B cell (primary cell): ENCODE measurements at regions of chr22 and their contacts with region 1.

Region 1: GRCh38 chr22:30634471-30635233 is 929 bp upstream of the SLC35E4 start:
- DNase-seq: peak; percentile 92
- ATAC-seq: peak; percentile 52
- H3K4me3 ChIP-seq: peak overlapping the region in 4 of 5 experiments; percentile 52 to 79 (median 65)
- H3K4me3 Mint-ChIP-seq: peak overlapping the region; percentile 88
- H3K27ac ChIP-seq: peak overlapping the region; percentile 82 to 88
- H3K27ac Mint-ChIP-seq: peak overlapping the region; percentile 94
- H3K4me1 ChIP-seq: peaks cover 18 to 28% of the 10 kb centered on the region in 2 donors
- H3K4me1 Mint-ChIP-seq: peaks cover 19% of the 10 kb centered on the region
- H3K27me3 ChIP-seq: no peaks in the 10 kb centered on the region
- H3K27me3 Mint-ChIP-seq: no peaks in the 10 kb centered on the region
- CTCF ChIP-seq: peak; percentile 91

Region 2: DNA sequence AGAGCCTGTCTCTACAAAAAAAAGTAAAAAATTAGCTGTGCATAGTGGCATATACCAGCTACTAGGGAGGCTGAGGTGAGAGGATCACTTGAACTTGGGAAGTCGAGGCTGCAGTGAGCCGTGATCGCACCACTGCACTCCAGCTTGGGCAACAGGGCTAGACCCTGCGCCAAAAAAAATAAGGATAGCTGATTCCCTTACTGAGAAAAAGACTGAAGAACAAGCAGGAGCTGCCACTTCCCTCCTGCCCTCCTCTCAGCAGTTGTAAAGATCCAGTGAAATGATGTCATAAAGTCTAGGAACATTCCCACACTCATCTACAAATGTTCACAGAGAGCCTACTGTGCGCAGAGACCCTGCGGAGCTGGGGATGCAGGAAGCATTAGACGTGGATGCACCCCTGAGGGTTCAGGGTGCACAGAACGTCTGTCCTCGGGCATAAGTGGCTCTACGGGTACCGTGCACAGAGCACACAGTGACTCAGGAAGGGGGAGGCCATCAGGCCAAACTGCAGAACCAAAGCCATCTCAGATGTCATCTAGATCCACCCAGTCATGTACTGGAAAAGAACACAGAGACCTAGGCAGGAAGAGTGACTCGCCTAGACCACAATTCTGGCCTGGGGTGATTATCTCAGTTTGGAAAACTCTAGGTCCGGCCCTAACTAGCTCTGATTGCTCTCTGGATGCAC is 226.1 kb before region 1 on chr22:
- CTCF ChIA-PET with region 1: no interaction called
- POLR2A ChIA-PET with region 1: no interaction called
- intact Hi-C with region 1: no loop called
- DNase-seq: no peak
- ATAC-seq: no peak
- H3K4me3 ChIP-seq: no peak overlapping the region
- H3K4me3 Mint-ChIP-seq: no peak overlapping the region
- H3K27ac ChIP-seq: no peak overlapping the region
- H3K27ac Mint-ChIP-seq: no peak overlapping the region
- H3K4me1 ChIP-seq: no peaks in the 10 kb centered on the region
- H3K4me1 Mint-ChIP-seq: no peaks in the 10 kb centered on the region
- H3K27me3 ChIP-seq: no peaks in the 10 kb centered on the region
- H3K27me3 Mint-ChIP-seq: no peaks in the 10 kb centered on the region
- CTCF ChIP-seq: no peak

Region 3: DNA sequence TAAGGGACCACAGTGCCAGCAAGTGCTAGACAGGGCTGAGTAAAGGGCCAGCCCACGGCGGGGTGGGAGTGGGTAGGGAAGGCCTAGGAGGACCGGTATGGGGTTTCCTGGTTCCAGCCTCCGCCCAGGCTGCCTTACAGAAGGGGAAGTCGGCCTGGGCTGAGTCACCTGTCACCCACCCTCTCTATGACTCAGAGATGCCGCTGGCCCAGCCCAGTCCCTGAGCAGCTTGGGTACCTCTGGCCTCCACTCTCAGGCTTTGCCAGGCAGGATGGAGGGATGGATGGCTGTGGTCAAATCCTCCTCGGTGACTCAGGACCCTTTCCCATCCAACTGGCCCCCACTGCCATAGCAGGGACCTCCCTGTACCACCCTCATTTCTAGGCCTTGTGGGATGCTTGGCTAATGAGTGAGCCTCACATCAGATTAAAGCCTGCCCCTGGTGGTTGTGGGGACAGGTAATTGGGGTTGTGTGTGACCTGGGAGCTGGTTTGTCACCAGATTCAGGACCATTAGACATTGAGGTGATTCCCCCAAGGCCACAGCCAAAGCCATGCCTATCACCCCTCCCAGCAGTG is 14.9 kb after region 1 on chr22:
- CTCF ChIA-PET with region 1: interaction called, 20 read pairs
- POLR2A ChIA-PET with region 1: interaction called, 4 read pairs
- intact Hi-C with region 1: loop called (anchors 1 kb)
- DNase-seq: peak; percentile 30
- ATAC-seq: peak; percentile 97
- H3K4me3 ChIP-seq: no peak overlapping the region
- H3K4me3 Mint-ChIP-seq: no peak overlapping the region
- H3K27ac ChIP-seq: no peak overlapping the region
- H3K27ac Mint-ChIP-seq: peak overlapping the region; percentile 26
- H3K4me1 ChIP-seq: peaks cover 0 to 7% of the 10 kb centered on the region in 2 donors
- H3K4me1 Mint-ChIP-seq: peaks cover 9% of the 10 kb centered on the region
- H3K27me3 ChIP-seq: no peaks in the 10 kb centered on the region
- H3K27me3 Mint-ChIP-seq: no peaks in the 10 kb centered on the region
- CTCF ChIP-seq: no peak

Region 4: DNA sequence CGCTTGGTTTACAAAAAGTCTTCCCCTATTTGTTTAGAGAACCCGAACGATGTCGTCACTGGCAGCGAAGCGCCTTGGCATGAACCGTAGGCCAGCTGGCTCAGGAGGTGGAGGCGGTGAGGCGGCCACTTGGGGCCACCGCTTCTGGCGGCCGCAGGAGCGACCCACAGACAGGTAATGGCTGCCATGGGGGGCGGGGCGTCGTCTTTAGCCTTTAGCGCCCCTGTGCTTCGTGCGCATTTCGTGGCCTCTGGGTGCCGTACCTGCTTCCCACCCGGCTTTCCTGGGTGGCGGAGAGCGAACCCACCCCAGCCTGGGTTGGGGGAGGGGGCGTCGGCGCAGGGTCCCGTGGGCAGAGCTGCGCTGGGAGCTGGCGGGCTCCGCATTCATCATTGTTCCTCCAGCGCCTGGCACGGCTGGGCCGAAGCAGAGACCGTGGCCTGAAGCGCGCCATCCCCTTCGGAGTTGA is 59.6 kb after region 1 on chr22:
- CTCF ChIA-PET with region 1: no interaction called
- POLR2A ChIA-PET with region 1: no interaction called
- intact Hi-C with region 1: no loop called
- DNase-seq: peak; percentile 72
- ATAC-seq: peak; percentile 73
- H3K4me3 ChIP-seq: peak overlapping the region in 4 of 5 experiments; percentile 49 to 72 (median 61)
- H3K4me3 Mint-ChIP-seq: peak overlapping the region; percentile 93
- H3K27ac ChIP-seq: peak overlapping the region in 1 of 2 donors; percentile 23
- H3K27ac Mint-ChIP-seq: no peak overlapping the region
- H3K4me1 ChIP-seq: peaks cover 7 to 12% of the 10 kb centered on the region in 2 donors
- H3K4me1 Mint-ChIP-seq: peaks cover 7% of the 10 kb centered on the region
- H3K27me3 ChIP-seq: peaks cover 0 to 38% (median 12%) of the 10 kb centered on the region in 4 experiments
- H3K27me3 Mint-ChIP-seq: peaks cover 46% of the 10 kb centered on the region
- CTCF ChIP-seq: no peak

Region 5: GRCh38 chr22:30733181-30733631 is 98.6 kb after region 1 on chr22:
- CTCF ChIA-PET with region 1: no interaction called
- POLR2A ChIA-PET with region 1: no interaction called
- intact Hi-C with region 1: no loop called
- DNase-seq: no peak
- ATAC-seq: no peak
- H3K4me3 ChIP-seq: no peak overlapping the region
- H3K4me3 Mint-ChIP-seq: no peak overlapping the region
- H3K27ac ChIP-seq: no peak overlapping the region
- H3K27ac Mint-ChIP-seq: no peak overlapping the region
- H3K4me1 ChIP-seq: no peaks in the 10 kb centered on the region
- H3K4me1 Mint-ChIP-seq: no peaks in the 10 kb centered on the region
- H3K27me3 ChIP-seq: no peaks in the 10 kb centered on the region
- H3K27me3 Mint-ChIP-seq: peaks cover 10% of the 10 kb centered on the region
- CTCF ChIP-seq: no peak

Region 6: DNA sequence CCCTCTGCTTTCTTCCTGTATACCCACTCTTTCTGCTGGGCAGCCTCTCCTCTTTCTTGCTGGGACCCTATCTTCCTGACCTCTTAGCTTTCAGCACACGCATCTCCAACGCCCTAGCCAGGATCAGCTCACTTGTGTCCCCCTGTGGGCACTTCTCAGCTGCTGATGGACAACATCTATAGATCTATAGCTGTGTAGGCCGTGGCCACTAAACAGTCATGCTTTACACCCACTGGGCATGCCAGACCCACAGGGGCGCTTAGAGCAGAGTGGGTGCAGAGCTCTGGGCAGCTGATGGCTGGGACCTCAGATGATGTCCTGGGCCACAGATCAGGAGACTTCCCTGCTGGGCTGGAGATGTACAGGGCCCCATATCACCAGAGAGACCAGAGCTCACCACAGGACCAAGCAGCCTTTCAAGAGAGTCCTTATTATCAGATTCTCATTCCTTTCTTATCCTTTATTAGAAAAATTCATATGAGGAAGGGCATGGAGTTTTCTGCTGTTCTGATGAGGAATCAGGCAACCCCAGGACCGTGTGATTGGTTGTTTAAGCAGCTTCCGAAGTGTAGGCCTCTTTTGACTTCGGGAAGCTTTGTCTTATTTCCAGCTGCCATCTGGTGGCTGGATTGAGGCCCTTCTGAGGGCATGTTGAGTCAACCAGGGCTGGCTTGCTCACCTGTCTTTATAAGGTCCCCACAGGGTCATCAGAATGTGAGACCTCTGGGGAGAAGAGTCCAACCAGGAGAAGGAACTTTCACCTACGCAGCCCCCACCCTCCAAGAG is 120.5 kb after region 1 on chr22:
- CTCF ChIA-PET with region 1: interaction called, 46 read pairs
- POLR2A ChIA-PET with region 1: interaction called, 4 read pairs
- intact Hi-C with region 1: no loop called
- DNase-seq: peak; percentile 42
- ATAC-seq: no peak
- H3K4me3 ChIP-seq: no peak overlapping the region
- H3K4me3 Mint-ChIP-seq: no peak overlapping the region
- H3K27ac ChIP-seq: no peak overlapping the region
- H3K27ac Mint-ChIP-seq: no peak overlapping the region
- H3K4me1 ChIP-seq: no peaks in the 10 kb centered on the region
- H3K4me1 Mint-ChIP-seq: no peaks in the 10 kb centered on the region
- H3K27me3 ChIP-seq: peaks cover 0 to 2% (median 0%) of the 10 kb centered on the region in 4 experiments
- H3K27me3 Mint-ChIP-seq: peaks cover 16% of the 10 kb centered on the region
- CTCF ChIP-seq: no peak

Region 7: GRCh38 chr22:30866811-30867271 is 232.2 kb after region 1 on chr22:
- CTCF ChIA-PET with region 1: no interaction called
- POLR2A ChIA-PET with region 1: no interaction called
- intact Hi-C with region 1: no loop called
- DNase-seq: no peak
- ATAC-seq: no peak
- H3K4me3 ChIP-seq: no peak overlapping the region
- H3K4me3 Mint-ChIP-seq: no peak overlapping the region
- H3K27ac ChIP-seq: no peak overlapping the region
- H3K27ac Mint-ChIP-seq: no peak overlapping the region
- H3K4me1 ChIP-seq: no peaks in the 10 kb centered on the region
- H3K4me1 Mint-ChIP-seq: no peaks in the 10 kb centered on the region
- H3K27me3 ChIP-seq: no peaks in the 10 kb centered on the region
- H3K27me3 Mint-ChIP-seq: no peaks in the 10 kb centered on the region
- CTCF ChIP-seq: no peak

Region 8: DNA sequence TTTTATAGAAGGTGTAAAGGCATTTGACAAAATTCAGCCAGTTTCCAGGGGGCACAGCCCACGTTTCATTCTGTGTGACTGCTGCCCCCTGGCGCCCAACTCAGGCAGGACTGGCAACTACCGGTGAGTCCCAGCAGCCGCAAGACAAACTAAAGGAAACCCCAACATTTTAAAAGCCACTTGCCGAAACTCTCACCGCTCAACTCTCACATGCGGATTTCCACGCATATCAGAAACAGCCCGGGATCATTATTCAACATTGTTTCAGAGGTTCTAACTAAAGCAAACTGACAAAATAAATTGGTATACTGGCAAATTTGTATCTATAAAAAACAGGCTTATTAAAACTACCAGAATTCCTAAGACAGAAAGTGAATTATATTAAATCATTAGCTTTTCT is 285.8 kb after region 1 on chr22:
- CTCF ChIA-PET with region 1: interaction called, 105 read pairs
- POLR2A ChIA-PET with region 1: interaction called, 9 read pairs
- intact Hi-C with region 1: no loop called
- DNase-seq: peak; percentile 83
- ATAC-seq: peak; percentile 71
- H3K4me3 ChIP-seq: peak overlapping the region in 2 of 5 experiments; percentile 21 to 72
- H3K4me3 Mint-ChIP-seq: peak overlapping the region; percentile 33
- H3K27ac ChIP-seq: no peak overlapping the region
- H3K27ac Mint-ChIP-seq: no peak overlapping the region
- H3K4me1 ChIP-seq: peaks cover 9 to 14% of the 10 kb centered on the region in 2 donors
- H3K4me1 Mint-ChIP-seq: peaks cover 12% of the 10 kb centered on the region
- H3K27me3 ChIP-seq: peaks cover 0 to 6% (median under 1%) of the 10 kb centered on the region in 4 experiments
- H3K27me3 Mint-ChIP-seq: peaks cover 3% of the 10 kb centered on the region
- CTCF ChIP-seq: peak; percentile 99